ENCODE measurements at regions of chr4 and their contacts with region 1.

Region 1: DNA sequence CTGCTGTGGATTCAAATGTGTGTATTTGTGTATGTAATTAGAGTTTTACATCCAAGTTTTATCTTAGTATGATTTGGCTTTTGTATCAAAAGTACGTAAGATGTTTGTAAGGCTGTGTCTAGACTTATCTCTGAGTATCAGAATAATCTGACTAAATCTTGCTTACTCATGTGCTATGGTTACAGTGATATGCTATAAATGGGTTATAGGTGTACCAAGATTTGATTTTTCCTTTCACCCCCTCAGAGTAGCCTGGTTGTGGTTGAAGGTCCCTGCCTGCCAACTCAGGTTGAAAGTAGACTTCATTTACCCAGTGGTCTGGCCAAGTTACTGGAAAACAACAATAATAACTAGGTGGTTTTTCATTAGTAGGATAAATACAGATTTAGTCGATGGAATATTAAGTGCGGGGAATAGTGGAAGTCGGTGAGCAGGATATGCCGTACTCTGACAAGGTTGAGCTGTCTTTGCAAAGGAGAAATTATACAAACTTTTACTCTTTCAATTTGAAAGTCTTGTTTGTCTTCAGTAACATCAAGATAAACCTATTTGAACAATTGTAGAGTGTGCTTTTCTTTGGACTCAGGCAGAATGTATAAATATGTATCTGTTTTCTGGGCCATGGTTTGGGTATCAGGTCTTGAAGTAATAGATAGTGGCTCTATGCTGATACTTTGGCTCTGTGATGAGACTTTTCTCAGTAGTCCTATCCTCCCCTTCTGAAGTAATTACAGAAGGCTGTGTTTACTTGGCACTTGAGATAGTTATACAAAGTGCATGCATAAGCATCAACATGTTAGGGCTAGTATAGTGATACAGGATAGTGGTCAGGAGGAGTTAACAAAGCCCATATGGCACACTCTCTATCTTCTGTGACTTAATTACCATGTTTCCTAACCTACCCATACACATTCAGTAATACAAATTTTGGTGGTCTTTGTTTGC is 23.7 kb downstream of the BMP2K start:
- DNase-seq: no peak
- ATAC-seq: no peak
- H3K4me3 Mint-ChIP-seq: peak overlapping the region; percentile 17
- H3K27ac Mint-ChIP-seq: peak overlapping the region; percentile 65
- H3K4me1 Mint-ChIP-seq: peaks cover 76% of the 10 kb centered on the region
- H3K27me3 Mint-ChIP-seq: no peaks in the 10 kb centered on the region
- CTCF ChIP-seq: no peak

Region 2: DNA sequence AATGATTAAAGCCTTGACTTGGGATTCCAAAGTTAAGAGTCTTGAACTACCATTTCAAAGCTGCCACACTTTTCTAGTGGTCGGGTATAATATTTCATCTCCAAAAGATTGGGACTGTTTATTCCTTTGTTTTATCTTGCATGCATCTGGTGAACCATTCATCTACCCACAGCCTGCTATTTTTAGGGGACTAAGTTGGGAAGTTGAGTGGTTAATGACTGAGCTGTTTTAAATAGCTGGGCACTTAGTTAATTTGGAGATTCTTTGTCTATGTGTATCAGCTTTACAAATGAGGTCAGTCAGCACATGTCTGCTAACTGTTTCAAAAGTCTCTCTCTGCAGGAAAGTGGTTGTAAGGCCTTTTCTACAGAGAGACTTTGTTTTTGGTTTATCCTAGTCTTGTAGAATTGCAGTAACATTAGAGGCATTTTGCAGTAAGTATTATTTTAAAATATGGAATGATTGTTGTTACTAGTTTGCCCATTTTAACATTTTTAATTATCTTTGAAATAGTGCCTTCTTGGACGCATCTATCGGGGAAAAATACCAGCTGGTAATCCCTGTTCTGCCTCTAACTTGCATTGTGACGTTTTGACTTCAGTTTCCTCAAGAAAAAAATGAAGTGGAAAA is 15.5 kb before region 1 on chr4:
- CTCF ChIA-PET with region 1: no interaction called
- POLR2A ChIA-PET with region 1: interaction called, 3 read pairs
- intact Hi-C with region 1: loop called (anchors 2 kb)
- DNase-seq: no peak
- ATAC-seq: no peak
- H3K4me3 Mint-ChIP-seq: no peak overlapping the region
- H3K27ac Mint-ChIP-seq: no peak overlapping the region
- H3K4me1 Mint-ChIP-seq: peaks cover 50% of the 10 kb centered on the region
- H3K27me3 Mint-ChIP-seq: no peaks in the 10 kb centered on the region
- CTCF ChIP-seq: no peak

Region 3: DNA sequence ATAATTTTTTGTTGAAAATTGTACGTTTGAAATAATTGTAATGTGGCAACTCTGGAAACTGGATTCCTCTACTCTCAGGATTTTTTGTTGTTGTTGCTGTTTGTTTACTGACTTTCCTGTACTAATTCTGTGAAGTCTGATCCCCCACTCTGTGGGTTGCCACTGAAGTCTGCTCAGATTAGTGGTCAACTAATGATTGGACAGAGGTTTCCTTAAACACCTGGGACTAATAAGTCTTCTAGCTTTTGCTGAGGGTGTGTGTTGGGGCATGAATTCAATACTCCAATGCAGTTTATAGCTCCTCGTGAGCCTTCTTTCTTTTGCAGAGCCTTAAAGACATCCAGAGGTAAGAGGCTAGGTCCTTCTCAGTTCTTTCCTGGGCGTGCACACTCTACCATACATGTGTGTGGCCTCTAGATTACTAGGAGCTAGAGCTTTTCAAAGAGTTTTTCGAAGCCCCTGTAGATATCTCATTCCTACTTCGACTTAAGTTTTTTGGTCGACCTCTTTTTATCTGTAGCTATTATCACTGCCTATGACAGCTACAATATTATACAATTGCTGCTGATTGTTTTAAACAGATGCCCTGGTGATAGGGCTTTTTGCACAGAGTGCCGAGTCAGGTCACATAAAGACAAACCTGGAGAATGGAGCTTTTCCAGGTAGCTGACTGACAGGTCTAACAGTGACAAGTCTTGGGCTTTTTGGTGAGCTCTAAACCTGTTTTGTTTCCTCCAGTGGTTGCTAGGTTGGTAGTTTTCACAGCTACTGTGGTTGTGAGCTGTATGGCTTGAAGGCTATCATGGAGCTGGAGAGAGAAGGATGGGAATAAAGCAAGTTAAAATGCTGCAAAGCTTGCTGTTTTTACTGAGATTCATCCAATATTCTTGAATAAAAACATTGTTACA is 10.4 kb after region 1 on chr4:
- CTCF ChIA-PET with region 1: no interaction called
- POLR2A ChIA-PET with region 1: interaction called, 3 read pairs
- intact Hi-C with region 1: loop called (anchors 1 kb)
- DNase-seq: no peak
- ATAC-seq: no peak
- H3K4me3 Mint-ChIP-seq: no peak overlapping the region
- H3K27ac Mint-ChIP-seq: peak overlapping the region; percentile 5
- H3K4me1 Mint-ChIP-seq: peaks cover 67% of the 10 kb centered on the region
- H3K27me3 Mint-ChIP-seq: no peaks in the 10 kb centered on the region
- CTCF ChIP-seq: no peak

Measured in activated B cell treated with CpG ODN at 0.5 μM for 24 hours (primary cell).